Ascending aorta (tissue), 2 donors: ENCODE measurements at regions of chr9 and their contacts with region 1.

Region 1: DNA sequence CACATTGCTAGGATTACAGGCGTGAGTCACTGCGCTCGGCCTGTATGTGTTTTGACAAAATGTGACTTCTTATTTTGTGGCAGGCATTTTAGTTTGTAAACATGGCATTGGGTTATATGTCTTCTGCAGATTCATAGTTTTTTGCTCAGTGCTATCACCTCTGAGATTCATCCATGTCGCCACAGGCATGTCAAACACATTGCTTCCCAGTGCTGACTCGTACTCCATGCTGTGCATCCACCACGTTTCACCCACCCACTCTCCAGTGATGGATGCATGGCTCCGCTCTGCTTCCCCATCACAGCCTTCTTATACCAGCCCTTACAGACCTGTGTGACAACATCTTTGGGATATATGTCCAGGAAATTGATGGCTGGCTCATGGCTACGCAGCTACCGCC is 158.8 kb downstream of the GAS1 start:
- DNase-seq: no peak
- H3K4me3 ChIP-seq: no peak overlapping the region
- H3K27ac ChIP-seq: no peak overlapping the region
- H3K4me1 ChIP-seq: no peaks in the 10 kb centered on the region
- H3K27me3 ChIP-seq: no peaks in the 10 kb centered on the region
- CTCF ChIP-seq: no peak

Region 2: GRCh38 chr9:86676396-86676795 is 112.1 kb before region 1 on chr9:
- intact Hi-C with region 1: loop called (anchors 5 kb)
- DNase-seq: no peak
- H3K4me3 ChIP-seq: no peak overlapping the region
- H3K27ac ChIP-seq: no peak overlapping the region
- H3K4me1 ChIP-seq: no peaks in the 10 kb centered on the region
- H3K27me3 ChIP-seq: no peaks in the 10 kb centered on the region
- CTCF ChIP-seq: no peak